SK-N-SH (cell line): ENCODE measurements at regions of chr1 and their contacts with region 1.

Region 1: DNA sequence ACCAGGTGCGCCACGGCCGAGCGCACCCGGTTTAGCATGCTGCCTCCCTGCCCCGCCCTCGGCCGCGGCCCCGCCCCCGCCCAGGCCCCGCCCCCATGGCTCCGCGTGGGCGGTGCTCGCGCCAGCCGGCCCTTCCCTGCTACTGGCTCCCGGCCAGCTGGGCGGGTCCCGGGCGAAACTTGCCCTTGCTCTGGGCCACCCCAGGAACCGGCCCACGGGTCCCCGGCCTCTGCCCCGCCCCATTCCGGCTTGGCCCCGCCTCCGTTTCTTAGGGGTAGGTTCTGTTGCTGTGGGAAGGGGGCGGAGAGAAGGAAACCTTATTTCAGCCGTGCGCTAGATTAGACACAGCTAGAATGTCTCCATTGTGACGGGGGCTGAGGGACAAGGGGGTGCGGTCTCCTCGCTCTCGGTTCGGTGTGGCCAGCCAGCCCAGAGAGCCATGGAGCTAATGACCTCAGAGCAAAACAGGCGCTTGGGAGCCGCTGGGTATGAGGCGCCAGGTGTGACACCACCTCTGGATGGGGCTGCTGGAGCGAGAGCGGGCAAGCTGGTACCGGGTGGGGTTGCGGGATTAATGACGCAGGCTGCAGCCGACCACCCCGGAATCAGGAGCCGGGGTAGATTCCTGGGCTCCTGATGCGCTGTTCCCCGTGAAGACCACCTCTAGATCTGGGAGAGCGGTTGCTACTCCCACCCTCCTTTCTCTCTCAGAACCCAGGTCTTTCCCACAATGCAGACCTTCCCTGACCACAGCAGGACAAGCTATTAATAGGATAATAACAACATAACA is at the start of gene PPM1J:
- DNase-seq: peak; percentile 96
- H3K4me3 ChIP-seq: peak within 1 kb of the TSS; percentile 72 to 83
- H3K27ac ChIP-seq: peak within 1 kb of the TSS in 1 of 2 experiments; percentile 29; a peak in 2 of 4 replicates
- H3K4me1 ChIP-seq: peaks cover 0 to 23% of the 10 kb centered on the region in 2 experiments; a peak in 1 of 4 replicates
- H3K27me3 ChIP-seq: no peaks in the 10 kb centered on the region
- CTCF ChIP-seq: no peak
- EP300 ChIP-seq: no peak
- RAD21 ChIP-seq: no peak
- polyA plus RNA-seq, gene PPM1J: 5.3 and 6.7 TPM in 2 replicates

Region 2: GRCh38 chr1:112674439-112674985 is 40.9 kb before region 1 on chr1 and contains the start of gene MOV10:
- CTCF ChIA-PET with region 1: interaction called, 20 read pairs
- POLR2A ChIA-PET with region 1: interaction called, 5 read pairs
- DNase-seq: peak; percentile 79
- H3K4me3 ChIP-seq: peak within 1 kb of the TSS; percentile 79 to 89
- H3K27ac ChIP-seq: peak within 1 kb of the TSS; percentile 75 to 94
- H3K4me1 ChIP-seq: peaks cover 11 to 12% of the 10 kb centered on the region in 2 experiments; a peak in 3 of 4 replicates
- H3K27me3 ChIP-seq: no peaks in the 10 kb centered on the region
- CTCF ChIP-seq: no peak
- EP300 ChIP-seq: no peak
- RAD21 ChIP-seq: no peak
- polyA plus RNA-seq, gene MOV10: 81.0 and 87.4 TPM in 2 replicates

Region 3: DNA sequence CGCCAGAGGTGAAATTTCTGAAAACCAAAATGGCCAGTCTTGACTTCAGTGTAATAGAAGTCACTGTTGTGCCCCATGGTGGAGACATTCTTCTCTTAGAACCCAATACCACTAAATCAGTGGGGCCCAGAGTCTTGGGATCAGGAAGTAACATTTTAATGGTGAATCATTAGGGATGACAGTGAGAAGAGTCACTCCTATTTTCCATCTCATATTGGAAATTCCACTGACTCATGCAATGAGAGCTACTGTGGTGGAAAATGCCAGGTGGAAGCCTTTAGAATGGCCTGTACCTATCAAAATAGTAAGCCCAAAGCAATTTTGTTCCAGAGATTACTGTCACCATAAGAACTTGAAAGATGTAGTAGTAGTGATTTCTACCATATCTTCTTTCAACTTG is 20.3 kb after region 1 on chr1:
- CTCF ChIA-PET with region 1: interaction called, 47 read pairs
- POLR2A ChIA-PET with region 1: no interaction called
- DNase-seq: no peak
- H3K4me3 ChIP-seq: no peak overlapping the region
- H3K27ac ChIP-seq: peak overlapping the region in 1 of 2 experiments; percentile 70; a peak in 2 of 4 replicates
- H3K4me1 ChIP-seq: no peaks in the 10 kb centered on the region
- H3K27me3 ChIP-seq: no peaks in the 10 kb centered on the region
- CTCF ChIP-seq: no peak
- EP300 ChIP-seq: peak in 1 of 2 experiments; percentile 80; a peak in 2 of 4 replicates
- RAD21 ChIP-seq: no peak

Region 4: GRCh38 chr1:112788561-112788960 is 73.1 kb after region 1 on chr1:
- CTCF ChIA-PET with region 1: interaction called, 46 read pairs
- POLR2A ChIA-PET with region 1: no interaction called
- DNase-seq: no peak
- H3K4me3 ChIP-seq: no peak overlapping the region
- H3K27ac ChIP-seq: no peak overlapping the region
- H3K4me1 ChIP-seq: peaks cover 0 to 19% of the 10 kb centered on the region in 2 experiments; a peak in 3 of 4 replicates
- H3K27me3 ChIP-seq: no peaks in the 10 kb centered on the region
- CTCF ChIP-seq: no peak
- EP300 ChIP-seq: no peak
- RAD21 ChIP-seq: no peak

Region 5: DNA sequence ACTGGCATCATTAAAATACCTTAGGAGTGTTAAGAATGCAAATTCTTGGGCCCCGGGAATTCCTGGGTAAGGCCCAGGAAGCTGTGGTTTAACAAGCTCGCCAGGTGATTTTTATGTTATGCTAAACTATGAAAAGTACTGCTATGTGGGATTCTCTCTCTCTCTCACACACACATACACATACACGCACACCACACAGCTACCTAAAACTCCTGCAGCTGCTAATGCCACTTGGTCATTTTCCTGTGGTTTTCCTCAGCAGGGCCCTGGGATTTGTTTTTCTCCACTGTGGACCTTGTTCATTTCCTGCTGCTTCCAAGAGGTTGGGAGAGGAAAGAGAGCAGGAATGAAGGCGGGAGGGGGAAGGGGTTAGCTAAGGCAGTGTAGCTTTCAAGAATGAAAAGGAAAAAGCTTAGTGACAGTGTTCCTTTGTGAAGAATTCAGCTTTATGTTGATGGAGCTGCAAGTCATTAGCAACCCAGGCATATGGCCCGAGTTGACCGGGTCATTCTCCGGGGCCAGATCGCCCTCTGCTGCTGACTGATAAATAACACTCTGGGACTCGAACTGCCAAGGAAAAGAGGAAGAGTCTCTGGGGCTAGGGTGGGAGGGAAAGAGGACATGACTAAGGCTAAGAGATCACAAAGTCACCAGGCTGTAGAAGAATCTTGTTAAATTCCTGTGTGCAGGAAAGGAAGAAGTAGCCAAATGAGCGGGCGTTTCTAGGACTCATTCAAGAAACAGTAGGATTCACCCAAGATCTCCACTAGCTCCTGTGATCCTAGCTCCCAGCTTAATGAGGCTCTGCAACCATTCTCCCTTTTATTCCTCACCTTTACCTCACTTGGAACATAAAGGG is 327.1 kb after region 1 on chr1:
- CTCF ChIA-PET with region 1: interaction called, 49 read pairs
- POLR2A ChIA-PET with region 1: no interaction called
- DNase-seq: peak; percentile 79
- H3K4me3 ChIP-seq: peak overlapping the region in 1 of 2 experiments; percentile 21; a peak in 1 of 4 replicates
- H3K27ac ChIP-seq: peak overlapping the region; percentile 48 to 70
- H3K4me1 ChIP-seq: peaks cover 7 to 18% of the 10 kb centered on the region in 2 experiments; a peak in 3 of 4 replicates
- H3K27me3 ChIP-seq: no peaks in the 10 kb centered on the region
- CTCF ChIP-seq: peak; percentile 70
- EP300 ChIP-seq: no peak
- RAD21 ChIP-seq: peak; percentile 96